ENCODE measurements at regions of chr10 and their contacts with region 1.

Region 1: GRCh38 chr10:110547139-110547761 is 20.2 kb upstream of the SMC3 start:
- DNase-seq: peak in 1 of 2 experiments; percentile 45
- H3K4me3 ChIP-seq: no peak overlapping the region
- H3K4me3 Mint-ChIP-seq: no peak overlapping the region
- H3K27ac Mint-ChIP-seq: no peak overlapping the region
- H3K4me1 ChIP-seq: no peaks in the 10 kb centered on the region
- H3K4me1 Mint-ChIP-seq: peaks cover 11% of the 10 kb centered on the region
- H3K27me3 ChIP-seq: no peaks in the 10 kb centered on the region
- H3K27me3 Mint-ChIP-seq: no peaks in the 10 kb centered on the region
- CTCF ChIP-seq: peak; percentile 85 to 89

Region 2: DNA sequence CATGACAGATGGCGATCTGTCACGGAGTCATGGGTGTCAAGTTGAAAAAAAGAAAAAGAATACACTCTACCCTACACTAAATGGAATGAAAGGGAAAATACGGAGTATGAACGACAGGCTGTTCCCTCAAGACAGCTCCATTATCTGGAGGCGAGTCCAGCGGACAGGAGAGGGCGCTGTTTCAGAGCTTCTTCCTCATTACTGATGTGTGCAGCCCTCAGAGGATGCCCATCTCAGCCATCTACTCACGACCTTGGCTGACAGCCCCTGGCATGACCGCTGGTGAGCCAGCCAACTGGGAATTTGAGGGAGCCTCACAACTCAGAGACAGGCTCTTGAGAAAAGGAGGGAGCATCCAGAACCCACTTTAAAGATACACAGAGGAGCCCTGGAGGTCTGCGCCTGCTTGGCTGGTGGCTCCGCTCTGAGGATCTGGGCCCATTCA is 192.9 kb before region 1 on chr10:
- CTCF ChIA-PET with region 1: interaction called, 9 read pairs
- POLR2A ChIA-PET with region 1: no interaction called
- intact Hi-C with region 1: loop called (anchors 1 kb)
- DNase-seq: peak; percentile 75
- H3K4me3 ChIP-seq: no peak overlapping the region
- H3K4me3 Mint-ChIP-seq: no peak overlapping the region
- H3K27ac Mint-ChIP-seq: no peak overlapping the region
- H3K4me1 ChIP-seq: peaks cover 31% of the 10 kb centered on the region
- H3K4me1 Mint-ChIP-seq: peaks cover 7% of the 10 kb centered on the region
- H3K27me3 ChIP-seq: no peaks in the 10 kb centered on the region
- H3K27me3 Mint-ChIP-seq: no peaks in the 10 kb centered on the region
- CTCF ChIP-seq: peak; percentile 58 to 72

Region 3: DNA sequence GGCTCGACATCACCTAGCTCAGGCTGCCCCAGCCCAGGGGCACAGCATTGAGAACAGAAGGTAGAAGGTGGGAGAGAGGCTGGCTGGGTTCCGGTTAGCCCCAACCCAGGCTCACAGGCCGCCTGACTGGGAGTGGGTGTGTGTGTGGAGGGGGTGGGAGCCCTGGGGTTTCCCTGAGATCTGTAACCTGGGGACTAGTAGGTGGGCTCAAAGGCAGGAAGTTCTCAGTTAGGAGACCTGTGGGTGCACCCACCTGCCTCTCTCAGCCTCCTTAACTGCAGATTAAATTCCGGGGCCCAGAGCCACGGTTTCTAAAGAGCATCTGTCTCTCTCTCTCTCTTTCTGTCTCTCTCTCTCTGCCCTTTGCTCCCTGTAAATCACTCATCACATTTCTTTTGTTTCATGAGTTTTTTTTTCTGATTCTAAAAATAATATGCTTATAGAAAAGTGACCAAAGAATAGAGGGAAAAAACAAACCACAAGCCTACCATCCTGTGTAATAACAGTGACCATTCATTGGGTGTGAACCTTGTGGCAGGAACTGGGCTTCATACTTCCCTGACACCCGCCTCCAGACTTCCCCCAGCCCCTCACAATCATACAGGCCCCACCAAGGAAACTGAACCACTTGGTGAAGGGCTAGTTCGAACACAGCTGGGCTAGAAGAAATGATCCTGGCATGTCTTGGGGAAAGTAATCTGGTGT is 159.1 kb before region 1 on chr10:
- CTCF ChIA-PET with region 1: interaction called, 10 read pairs
- POLR2A ChIA-PET with region 1: no interaction called
- intact Hi-C with region 1: no loop called
- DNase-seq: no peak
- H3K4me3 ChIP-seq: no peak overlapping the region
- H3K4me3 Mint-ChIP-seq: no peak overlapping the region
- H3K27ac Mint-ChIP-seq: peak overlapping the region; percentile 60
- H3K4me1 ChIP-seq: peaks cover 24% of the 10 kb centered on the region
- H3K4me1 Mint-ChIP-seq: peaks cover 32% of the 10 kb centered on the region
- H3K27me3 ChIP-seq: no peaks in the 10 kb centered on the region
- H3K27me3 Mint-ChIP-seq: no peaks in the 10 kb centered on the region
- CTCF ChIP-seq: no peak